ENCODE measurements at regions of chr1 and their contacts with region 1.

Region 1: GRCh38 chr1:43763497-43763973 is 56.2 kb downstream of the ST3GAL3 start:
- DNase-seq: peak; percentile 92
- H3K4me3 ChIP-seq: no peak overlapping the region
- H3K27ac ChIP-seq: no peak overlapping the region
- H3K4me1 ChIP-seq: peaks cover 0 to 25% (median 18%) of the 10 kb centered on the region in 4 donors
- H3K27me3 ChIP-seq: no peaks in the 10 kb centered on the region
- CTCF ChIP-seq: peak; percentile 82 to 97 (median 87)
- EP300 ChIP-seq: no peak
- POLR2A ChIP-seq: no peak

Region 2: DNA sequence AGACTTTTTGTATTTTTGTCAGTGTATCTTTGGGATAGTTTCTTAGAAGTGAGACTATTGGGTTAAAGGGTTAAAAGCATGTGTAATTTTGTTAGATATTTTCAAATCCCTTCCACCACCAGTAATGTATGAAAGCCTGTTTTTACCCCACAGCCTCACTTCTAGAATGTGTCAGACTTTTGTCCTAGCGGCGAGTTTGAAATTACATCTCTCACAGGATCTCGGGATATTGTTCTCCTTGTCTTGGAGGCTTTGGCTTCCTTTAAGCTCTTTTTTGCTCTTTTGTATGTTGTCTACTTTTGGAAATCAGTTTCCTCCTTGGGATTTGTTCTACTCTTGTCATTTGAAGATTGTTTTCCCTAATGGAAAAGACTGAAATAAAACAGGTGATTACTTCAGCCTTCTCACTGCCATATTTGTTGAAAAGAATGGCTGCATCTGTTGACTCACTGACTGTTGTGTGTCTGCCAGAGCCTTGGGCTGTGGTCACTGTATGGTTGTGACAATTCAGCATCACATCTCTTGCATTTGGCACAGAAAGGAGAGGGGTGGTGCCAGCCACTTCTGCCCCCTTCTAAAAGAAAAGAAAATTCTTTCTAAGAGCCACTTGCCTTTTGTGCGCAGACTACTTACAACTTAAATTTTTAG is 33.6 kb before region 1 on chr1:
- intact Hi-C with region 1: no loop called
- DNase-seq: no peak
- H3K4me3 ChIP-seq: no peak overlapping the region
- H3K27ac ChIP-seq: no peak overlapping the region
- H3K4me1 ChIP-seq: peaks cover 6 to 16% (median 9%) of the 10 kb centered on the region in 4 donors
- H3K27me3 ChIP-seq: no peaks in the 10 kb centered on the region
- CTCF ChIP-seq: no peak
- EP300 ChIP-seq: no peak
- POLR2A ChIP-seq: no peak

Region 3: DNA sequence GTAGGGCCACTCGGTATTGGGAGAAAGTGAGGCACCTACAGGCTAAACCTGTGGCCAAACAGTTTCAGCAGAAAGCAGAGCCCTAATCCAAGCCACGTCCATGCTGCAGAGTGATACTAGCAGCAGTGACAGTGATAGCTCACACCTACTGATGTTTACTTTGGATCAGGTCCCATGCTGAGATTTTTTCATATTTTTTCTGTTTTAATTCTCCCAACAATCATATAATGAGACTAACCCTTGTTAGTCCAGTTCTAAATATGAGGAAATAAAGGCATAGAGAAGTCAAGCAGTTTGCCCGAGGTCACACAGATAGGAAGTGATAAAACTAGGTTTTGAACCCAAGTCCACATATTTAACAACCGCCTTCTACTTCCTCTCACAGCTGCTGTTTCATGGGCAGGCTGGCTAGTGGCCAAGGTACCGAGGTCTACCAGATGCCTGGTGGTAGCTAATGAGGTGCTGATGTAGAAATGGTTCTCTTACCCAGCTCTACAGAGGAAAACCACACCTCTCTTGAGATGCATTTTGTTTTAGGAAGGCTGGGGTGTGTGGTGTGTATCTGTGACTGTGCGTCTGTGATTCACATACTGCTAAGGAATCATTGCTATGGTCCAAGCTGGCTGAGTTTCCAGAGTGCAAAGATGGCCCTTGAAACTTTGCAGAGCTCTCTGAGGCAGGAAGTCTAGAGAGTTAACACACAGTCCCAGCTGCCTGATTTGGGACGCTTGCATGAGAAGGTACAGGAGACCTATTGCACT is 89.8 kb after region 1 on chr1:
- intact Hi-C with region 1: loop called (anchors 5 kb)
- DNase-seq: no peak
- H3K4me3 ChIP-seq: no peak overlapping the region
- H3K27ac ChIP-seq: peak overlapping the region in 1 of 4 donors; percentile 23
- H3K4me1 ChIP-seq: peaks cover 18 to 29% (median 24%) of the 10 kb centered on the region in 4 donors
- H3K27me3 ChIP-seq: no peaks in the 10 kb centered on the region
- CTCF ChIP-seq: no peak
- EP300 ChIP-seq: no peak
- POLR2A ChIP-seq: no peak

Region 4: DNA sequence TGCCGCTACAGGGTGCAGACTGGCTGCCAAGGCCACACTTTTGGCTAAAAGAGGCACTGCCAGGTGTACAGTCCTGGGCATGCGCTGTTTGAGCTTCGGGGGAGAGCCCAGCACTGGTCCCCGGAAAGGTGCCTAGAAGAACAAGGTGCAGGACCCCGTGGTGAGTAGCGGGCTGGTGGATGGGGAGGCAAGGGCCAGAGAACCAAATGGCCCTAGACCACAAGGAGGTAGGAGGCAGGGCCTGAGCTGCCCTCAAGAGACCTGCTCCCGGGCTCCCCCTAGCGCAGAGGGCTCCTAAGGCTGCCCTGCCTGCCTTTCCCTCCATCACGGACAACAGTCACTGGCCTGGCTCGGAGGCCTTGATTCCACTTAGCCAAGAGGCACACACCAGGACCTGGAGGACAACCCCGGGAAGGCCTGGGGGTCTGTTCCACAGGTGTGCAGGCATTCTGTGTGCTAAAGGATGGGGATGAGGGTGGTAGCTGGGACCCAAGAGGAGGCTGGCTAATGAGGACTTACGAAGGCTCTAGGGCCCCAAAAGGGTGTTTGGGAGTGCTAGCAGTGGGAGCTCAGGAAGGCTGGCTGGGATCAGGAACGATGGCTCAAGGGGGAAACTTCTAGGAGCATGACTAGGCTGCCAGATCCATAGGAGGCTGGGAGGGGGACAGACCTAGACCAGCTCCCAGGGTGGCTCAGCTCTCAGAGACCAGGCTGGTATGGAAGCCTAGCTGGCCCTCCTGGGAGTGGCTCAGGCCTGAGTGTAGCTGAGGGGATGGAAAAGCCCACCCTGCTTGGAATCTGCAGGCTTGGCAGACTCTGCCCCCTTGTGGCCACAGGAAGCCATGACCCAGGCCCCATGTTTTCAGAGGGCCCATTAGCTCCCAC is 170.8 kb after region 1 on chr1:
- intact Hi-C with region 1: loop called (anchors 1 kb)
- DNase-seq: no peak
- H3K4me3 ChIP-seq: peak overlapping the region; percentile 47 to 55 (median 53)
- H3K27ac ChIP-seq: peak overlapping the region; percentile 4 to 49 (median 32)
- H3K4me1 ChIP-seq: peaks cover 20 to 44% (median 42%) of the 10 kb centered on the region in 4 donors
- H3K27me3 ChIP-seq: peaks cover 0 to 18% (median 0%) of the 10 kb centered on the region in 4 donors
- CTCF ChIP-seq: peak; percentile 89 to 92 (median 90)
- EP300 ChIP-seq: no peak
- POLR2A ChIP-seq: no peak

Region 5: DNA sequence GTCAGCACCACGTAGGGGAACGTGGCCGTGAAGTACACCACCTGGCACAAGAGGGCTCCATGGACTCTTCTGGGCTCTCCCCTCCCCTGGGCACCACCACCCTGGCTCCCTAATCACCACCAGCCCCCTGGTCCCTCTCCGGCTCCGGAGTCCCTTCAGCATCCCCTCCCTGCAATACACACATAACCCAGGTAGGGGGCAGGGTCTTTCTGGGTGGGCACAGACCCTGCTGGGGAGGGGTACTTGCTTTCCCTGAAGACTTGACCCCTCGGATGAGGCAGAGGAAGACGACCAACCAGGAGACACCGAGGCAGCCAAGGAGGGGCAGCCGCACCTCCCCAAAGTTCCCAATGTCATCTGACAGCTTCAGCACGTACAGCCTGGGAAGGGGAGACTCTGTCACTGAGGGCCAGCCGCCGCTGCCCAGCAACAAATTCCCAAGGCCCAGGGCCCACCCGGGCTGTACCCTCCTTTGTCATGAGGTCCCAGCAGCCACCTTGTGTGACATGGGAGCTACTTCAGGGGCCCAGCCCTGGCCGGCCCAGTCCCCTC is 239.1 kb after region 1 on chr1:
- intact Hi-C with region 1: no loop called
- DNase-seq: no peak
- H3K4me3 ChIP-seq: no peak overlapping the region
- H3K27ac ChIP-seq: no peak overlapping the region
- H3K4me1 ChIP-seq: peaks cover 0 to 9% (median 6%) of the 10 kb centered on the region in 4 donors
- H3K27me3 ChIP-seq: no peaks in the 10 kb centered on the region
- CTCF ChIP-seq: no peak
- EP300 ChIP-seq: no peak
- POLR2A ChIP-seq: no peak

Region 6: GRCh38 chr1:44029906-44030604 is 266.5 kb after region 1 on chr1:
- intact Hi-C with region 1: loop called (anchors 10 kb)
- DNase-seq: peak; percentile 96
- H3K4me3 ChIP-seq: peak overlapping the region; percentile 67 to 86 (median 80)
- H3K27ac ChIP-seq: peak overlapping the region; percentile 86 to 90 (median 88)
- H3K4me1 ChIP-seq: peaks cover 7 to 57% (median 44%) of the 10 kb centered on the region in 4 donors
- H3K27me3 ChIP-seq: no peaks in the 10 kb centered on the region
- CTCF ChIP-seq: peak in 1 of 3 experiments; percentile 23
- EP300 ChIP-seq: no peak
- POLR2A ChIP-seq: no peak